A549 (cell line): ENCODE measurements at regions of chr12 and their contacts with region 1.

Region 1: DNA sequence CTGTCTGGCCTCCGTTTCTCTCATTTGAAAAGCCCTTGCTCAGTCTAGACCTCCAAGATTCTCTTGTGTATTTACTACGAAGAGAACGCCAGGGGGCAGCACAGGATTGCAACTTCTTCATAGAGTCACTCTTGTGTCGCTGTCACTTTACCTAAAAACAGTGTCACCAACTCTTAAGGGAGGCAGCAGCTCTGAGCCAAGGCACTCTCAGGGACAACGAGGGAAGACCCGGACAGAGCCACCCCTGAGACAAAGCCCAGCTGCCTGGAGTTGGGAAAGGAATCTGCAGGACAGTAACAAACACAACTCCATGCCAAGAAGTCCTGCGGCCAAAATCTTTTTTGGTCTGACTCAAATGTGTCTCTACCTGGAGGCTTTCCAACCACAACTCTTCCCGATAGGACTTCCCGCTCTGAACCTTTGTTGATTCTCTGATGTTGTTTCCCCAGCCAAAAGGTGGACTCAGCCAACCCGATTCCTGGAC is 9.6 kb upstream of the RPAP3 start:
- DNase-seq: peak; percentile 76 to 80
- ATAC-seq: peak; percentile 56 to 82; a peak in 4 of 6 replicates
- H3K4me3 ChIP-seq: no peak overlapping the region
- H3K27ac ChIP-seq: no peak overlapping the region
- H3K4me1 ChIP-seq: peaks cover 9% of the 10 kb centered on the region
- CTCF ChIP-seq: peak; percentile 93
- EP300 ChIP-seq: no peak
- POLR2A ChIP-seq: no peak
- RAD21 ChIP-seq: peak; percentile 90 to 93

Region 2: GRCh38 chr12:47758834-47759690 is 43.6 kb after region 1 on chr12 and contains the start of gene RAPGEF3:
- CTCF ChIA-PET with region 1: interaction called, 87 read pairs
- POLR2A ChIA-PET with region 1: interaction called, 9 read pairs
- DNase-seq: peak; percentile 82 to 92
- ATAC-seq: peak; percentile 87 to 94
- H3K4me3 ChIP-seq: peak within 1 kb of the TSS; percentile 58
- H3K27ac ChIP-seq: peak within 1 kb of the TSS; percentile 80 to 94
- H3K4me1 ChIP-seq: peaks cover 10% of the 10 kb centered on the region
- CTCF ChIP-seq: peak; percentile 62
- EP300 ChIP-seq: no peak
- POLR2A ChIP-seq: peak; percentile 9; the same call in 1 of the 2 replicates
- RAD21 ChIP-seq: 0 out of 5 replicates have a peak, but pooled peaks of 1 of the 2 experiments have one; percentile 15
- polyA plus RNA-seq, gene RAPGEF3: 0.70 and 0.75 TPM in 2 replicates

Region 3: DNA sequence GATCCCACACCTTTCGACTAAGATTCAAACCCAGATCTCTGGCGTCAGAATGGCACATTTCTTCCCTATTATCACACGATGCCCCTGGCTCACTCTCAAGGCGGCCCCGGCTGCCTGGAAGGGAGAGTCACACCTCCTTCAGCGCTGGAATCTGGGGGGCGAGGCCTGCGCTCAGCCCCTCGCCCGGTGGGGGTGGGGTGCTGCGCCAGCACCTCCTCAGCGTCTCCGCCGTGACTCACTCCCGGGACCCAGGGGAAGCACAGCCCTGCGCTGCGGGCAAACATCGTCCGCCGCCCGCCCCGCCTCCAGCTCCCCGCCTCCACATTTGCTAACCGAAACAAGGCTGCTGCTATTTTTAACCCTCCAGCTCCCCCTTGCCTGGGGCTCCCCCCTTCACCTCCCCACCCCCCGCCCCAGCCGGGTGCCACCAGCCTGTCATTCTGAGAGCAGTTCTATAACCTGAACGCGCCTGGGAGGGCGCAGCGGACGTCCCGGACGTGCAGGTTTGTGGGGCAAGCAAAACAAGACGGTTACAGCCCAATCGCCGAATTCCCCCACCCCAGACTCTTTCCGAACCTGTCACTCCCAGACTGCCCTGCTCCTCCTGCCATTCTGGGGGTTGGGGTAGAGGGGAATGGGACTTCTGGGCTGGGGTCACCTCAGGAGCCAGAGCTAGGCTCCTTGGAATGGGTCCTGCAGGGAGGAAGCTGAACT is 97.5 kb after region 1 on chr12:
- CTCF ChIA-PET with region 1: interaction called, 11 read pairs
- POLR2A ChIA-PET with region 1: no interaction called
- DNase-seq: peak; percentile 74 to 85
- ATAC-seq: peak; percentile 77 to 85
- H3K4me3 ChIP-seq: peak overlapping the region; percentile 37
- H3K27ac ChIP-seq: peak overlapping the region; percentile 76 to 85
- H3K4me1 ChIP-seq: peaks cover 93% of the 10 kb centered on the region
- CTCF ChIP-seq: no peak
- EP300 ChIP-seq: no peak
- POLR2A ChIP-seq: no peak
- RAD21 ChIP-seq: no peak; a peak in 1 of 5 replicates

Region 4: GRCh38 chr12:47819896-47820630 is 104.6 kb after region 1 on chr12 and contains the start of gene HDAC7:
- CTCF ChIA-PET with region 1: interaction called, 10 read pairs
- POLR2A ChIA-PET with region 1: no interaction called
- DNase-seq: peak; percentile 86 to 90
- ATAC-seq: peak; percentile 52 to 74
- H3K4me3 ChIP-seq: peak within 1 kb of the TSS; percentile 89
- H3K27ac ChIP-seq: peak within 1 kb of the TSS; percentile 96 to 100
- H3K4me1 ChIP-seq: peaks cover 68% of the 10 kb centered on the region
- CTCF ChIP-seq: no peak
- EP300 ChIP-seq: 0 out of 5 replicates have a peak, but pooled peaks have one; percentile 23 to 29
- POLR2A ChIP-seq: peak; percentile 82
- RAD21 ChIP-seq: no peak
- polyA plus RNA-seq, gene HDAC7: 17.2 and 20.8 TPM in 2 replicates